A673 (cell line): ENCODE measurements at regions of chr18 and their contacts with region 1.

Region 1: DNA sequence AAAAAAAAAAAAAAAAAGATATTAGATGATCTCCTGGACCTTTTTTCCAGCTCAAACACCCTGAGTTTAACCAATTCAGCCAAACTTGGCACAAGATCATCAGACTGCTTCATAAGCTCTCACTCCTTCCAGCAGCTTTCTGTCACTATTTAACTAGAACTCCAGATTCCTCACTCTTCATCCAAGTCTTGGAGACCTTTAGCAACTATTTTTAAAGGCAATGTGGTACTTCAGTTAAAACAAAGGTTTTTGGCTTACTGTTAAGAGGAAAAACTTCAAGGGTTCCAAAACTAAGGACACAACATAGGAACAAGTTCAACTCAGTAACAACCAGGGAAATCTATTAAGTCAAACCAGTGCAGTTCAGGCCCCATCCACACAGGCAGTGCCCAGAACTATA is 23.2 kb downstream of the LAMA1 start:
- DNase-seq: no peak
- H3K4me3 ChIP-seq: no peak overlapping the region
- H3K27ac ChIP-seq: no peak overlapping the region
- H3K4me1 ChIP-seq: no peaks in the 10 kb centered on the region
- H3K27me3 ChIP-seq: no peaks in the 10 kb centered on the region
- CTCF ChIP-seq: no peak

Region 2: DNA sequence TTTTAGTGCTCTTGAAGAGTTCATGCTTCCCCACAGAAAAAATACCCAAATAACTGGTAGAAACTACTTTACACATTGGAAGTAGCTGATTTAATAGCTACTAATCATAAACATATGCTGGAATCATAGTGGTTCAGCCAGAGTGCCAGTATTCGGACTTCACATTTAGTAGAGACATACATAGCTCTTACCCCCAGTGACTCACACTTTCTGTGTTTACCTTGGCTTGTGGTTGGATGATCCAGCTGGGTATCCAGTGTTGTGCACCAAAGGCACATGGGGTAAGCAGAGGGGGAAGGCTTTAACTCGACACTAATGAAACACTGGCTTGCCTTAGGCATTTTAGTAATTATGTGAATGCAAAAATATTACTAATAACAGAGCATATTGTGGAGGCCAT is 346.8 kb before region 1 on chr18:
- CTCF ChIA-PET with region 1: no interaction called
- POLR2A ChIA-PET with region 1: no interaction called
- intact Hi-C with region 1: no loop called
- DNase-seq: no peak
- H3K4me3 ChIP-seq: no peak overlapping the region
- H3K27ac ChIP-seq: no peak overlapping the region
- H3K4me1 ChIP-seq: no peaks in the 10 kb centered on the region
- H3K27me3 ChIP-seq: no peaks in the 10 kb centered on the region
- CTCF ChIP-seq: no peak

Region 3: DNA sequence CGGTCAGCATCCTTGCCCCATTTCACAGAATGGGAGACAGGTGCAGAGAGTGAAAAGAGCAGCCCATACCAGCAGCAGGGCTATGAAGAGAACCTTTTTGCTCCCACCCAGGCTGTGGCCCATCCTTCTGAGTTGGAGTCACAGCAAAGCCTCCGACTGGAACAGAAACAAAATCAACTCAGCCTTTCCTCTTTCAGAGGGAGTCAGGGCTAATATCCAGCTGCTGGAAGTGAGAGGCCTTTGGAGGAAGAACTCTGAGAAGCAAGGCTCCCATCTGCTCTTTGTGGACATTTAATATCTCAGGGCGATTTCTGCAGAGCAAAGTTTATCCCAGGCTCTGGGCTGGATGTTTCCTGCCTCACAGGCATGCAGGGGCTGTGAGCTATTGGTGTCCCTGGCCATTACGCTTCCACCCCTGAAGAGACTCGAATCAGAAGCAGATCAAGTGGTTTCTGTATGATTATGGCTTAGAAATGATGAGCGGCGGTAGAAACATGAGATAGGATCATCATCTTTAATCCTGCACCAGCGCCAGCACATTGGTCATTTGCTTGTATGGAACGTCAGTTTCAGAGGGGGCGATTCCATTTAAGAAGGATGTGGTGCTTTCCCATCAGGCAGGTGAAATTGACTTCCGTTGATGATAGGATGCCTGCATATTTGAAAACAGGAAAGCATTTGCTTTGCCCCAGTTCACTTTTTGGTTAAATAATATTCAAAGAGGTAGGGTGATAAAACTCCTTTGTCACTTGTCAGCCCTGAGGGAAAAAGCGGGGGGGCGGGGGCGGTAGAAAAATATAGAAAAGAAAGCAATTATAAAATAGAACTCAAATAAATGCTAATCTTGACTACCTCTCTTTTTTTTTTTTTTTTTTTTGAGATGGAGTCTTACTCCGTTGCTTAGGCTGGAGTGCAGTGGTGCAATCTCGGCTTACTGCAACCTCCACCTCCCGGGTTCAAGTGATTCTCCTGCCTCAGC is 288.9 kb after region 1 on chr18:
- CTCF ChIA-PET with region 1: no interaction called
- POLR2A ChIA-PET with region 1: interaction called, 20 read pairs
- intact Hi-C with region 1: no loop called
- DNase-seq: no peak
- H3K4me3 ChIP-seq: no peak overlapping the region
- H3K27ac ChIP-seq: no peak overlapping the region
- H3K4me1 ChIP-seq: no peaks in the 10 kb centered on the region
- H3K27me3 ChIP-seq: no peaks in the 10 kb centered on the region
- CTCF ChIP-seq: no peak

Region 4: GRCh38 chr18:8937160-8938094 is 1843.0 kb after region 1 on chr18:
- CTCF ChIA-PET with region 1: no interaction called
- POLR2A ChIA-PET with region 1: no interaction called
- intact Hi-C with region 1: no loop called
- DNase-seq: no peak
- H3K4me3 ChIP-seq: no peak overlapping the region
- H3K27ac ChIP-seq: no peak overlapping the region
- H3K4me1 ChIP-seq: no peaks in the 10 kb centered on the region
- H3K27me3 ChIP-seq: no peaks in the 10 kb centered on the region
- CTCF ChIP-seq: no peak